Upper lobe of right lung (tissue), 1 donor: ENCODE measurements at regions of chr1 and their contacts with region 1.

Region 1: GRCh38 chr1:2240270-2241156 is 12.4 kb downstream of the SKI start:
- DNase-seq: peak; percentile 97
- ATAC-seq: peak; percentile 87
- H3K4me3 ChIP-seq: no peak overlapping the region
- H3K27ac ChIP-seq: peak overlapping the region; percentile 11
- H3K4me1 ChIP-seq: peaks cover 85% of the 10 kb centered on the region
- H3K27me3 ChIP-seq: no peaks in the 10 kb centered on the region
- CTCF ChIP-seq: no peak

Region 2: GRCh38 chr1:2300851-2301606 is 60.5 kb after region 1 on chr1:
- intact Hi-C with region 1: loop called (anchors 10 kb)
- DNase-seq: peak; percentile 89
- ATAC-seq: peak; percentile 75
- H3K4me3 ChIP-seq: peak overlapping the region; percentile 40
- H3K27ac ChIP-seq: peak overlapping the region; percentile 88
- H3K4me1 ChIP-seq: peaks cover 50% of the 10 kb centered on the region
- H3K27me3 ChIP-seq: no peaks in the 10 kb centered on the region
- CTCF ChIP-seq: no peak

Region 3: DNA sequence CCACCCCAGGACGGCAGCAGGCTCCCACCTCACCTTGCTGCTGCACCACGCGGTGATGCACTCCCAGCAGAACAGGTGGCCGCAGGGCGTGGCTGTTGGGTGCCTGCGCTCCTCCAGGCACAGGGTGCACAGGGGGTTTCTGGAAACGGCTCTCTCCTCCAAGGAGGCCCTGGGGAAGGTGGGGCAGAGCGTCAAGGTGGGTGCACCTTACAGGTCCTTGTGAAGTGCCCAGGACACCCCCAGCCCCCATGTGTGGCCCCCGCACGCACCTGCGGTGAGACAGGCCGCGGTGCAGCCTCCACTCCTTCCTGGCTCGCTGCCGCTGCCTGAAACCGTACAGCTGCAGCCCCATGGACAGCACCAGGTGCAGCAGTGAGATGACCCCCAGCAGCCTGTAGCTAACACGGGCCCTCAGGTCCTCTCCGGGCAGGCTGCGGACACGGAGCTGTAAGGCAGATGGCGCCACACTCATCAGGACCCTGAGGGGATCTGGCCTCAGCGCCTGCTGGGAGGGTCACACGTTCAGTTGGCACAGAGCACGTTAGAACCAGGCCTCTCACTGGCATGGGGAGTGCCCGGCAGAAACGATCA is 166.0 kb after region 1 on chr1:
- intact Hi-C with region 1: no loop called
- DNase-seq: no peak
- ATAC-seq: no peak
- H3K4me3 ChIP-seq: no peak overlapping the region
- H3K27ac ChIP-seq: no peak overlapping the region
- H3K4me1 ChIP-seq: peaks cover under 1% of the 10 kb centered on the region
- H3K27me3 ChIP-seq: no peaks in the 10 kb centered on the region
- CTCF ChIP-seq: no peak

Region 4: DNA sequence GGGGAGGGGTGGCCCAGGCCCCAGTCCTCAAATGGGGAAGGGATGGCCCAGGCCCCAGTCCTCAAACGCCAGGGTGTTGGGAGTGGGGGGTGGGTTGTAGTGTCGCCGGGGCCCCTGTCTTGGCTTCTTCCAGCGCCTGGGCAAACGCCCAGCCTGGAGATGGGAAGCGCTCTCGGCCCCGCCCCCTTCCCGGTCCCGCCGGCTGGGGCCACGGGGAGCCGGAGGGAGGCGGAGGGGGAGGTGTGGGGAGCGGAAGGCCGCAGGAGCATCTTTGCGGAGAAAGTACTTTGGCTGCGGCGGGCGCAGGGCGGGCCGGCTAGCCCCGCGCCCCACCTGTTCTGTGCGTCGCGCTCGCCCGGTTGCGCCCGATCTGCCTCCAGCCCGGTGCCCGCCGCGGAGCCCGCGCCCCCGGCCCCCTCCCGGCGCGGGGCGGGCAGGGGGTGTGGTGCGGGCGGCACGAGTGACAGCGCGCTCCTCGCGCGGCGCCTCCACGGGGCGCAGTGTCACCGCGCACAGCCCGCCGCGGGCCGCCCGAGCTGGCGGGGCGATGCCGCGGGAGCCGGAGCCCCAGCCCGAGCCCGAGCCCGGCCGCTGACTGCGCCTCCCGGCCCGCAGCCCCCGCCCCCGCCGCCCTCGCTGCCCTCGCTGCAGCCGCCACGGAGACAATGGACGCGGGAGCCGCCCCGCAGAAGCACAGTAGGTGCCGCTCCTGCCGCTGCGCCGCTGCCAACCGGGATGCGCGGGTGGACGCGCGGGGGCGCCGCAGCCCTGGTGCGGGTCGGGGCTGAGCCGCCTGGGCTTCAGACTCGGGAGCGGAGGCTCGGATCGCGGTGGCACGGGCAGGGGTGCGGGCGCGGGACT is 203.0 kb after region 1 on chr1:
- intact Hi-C with region 1: no loop called
- DNase-seq: no peak
- ATAC-seq: no peak
- H3K4me3 ChIP-seq: no peak overlapping the region
- H3K27ac ChIP-seq: no peak overlapping the region
- H3K4me1 ChIP-seq: no peaks in the 10 kb centered on the region
- H3K27me3 ChIP-seq: peaks cover 50% of the 10 kb centered on the region
- CTCF ChIP-seq: no peak